ENCODE measurements at regions of chr3 and their contacts with region 1.

Region 1: GRCh38 chr3:141303481-141304223 is 64.7 kb upstream of the ZBTB38 start:
- DNase-seq: peak; percentile 52
- H3K4me3 Mint-ChIP-seq: no peak overlapping the region
- H3K27ac Mint-ChIP-seq: no peak overlapping the region
- H3K4me1 Mint-ChIP-seq: peaks cover 34% of the 10 kb centered on the region
- H3K27me3 Mint-ChIP-seq: peaks cover 4% of the 10 kb centered on the region

Region 2: DNA sequence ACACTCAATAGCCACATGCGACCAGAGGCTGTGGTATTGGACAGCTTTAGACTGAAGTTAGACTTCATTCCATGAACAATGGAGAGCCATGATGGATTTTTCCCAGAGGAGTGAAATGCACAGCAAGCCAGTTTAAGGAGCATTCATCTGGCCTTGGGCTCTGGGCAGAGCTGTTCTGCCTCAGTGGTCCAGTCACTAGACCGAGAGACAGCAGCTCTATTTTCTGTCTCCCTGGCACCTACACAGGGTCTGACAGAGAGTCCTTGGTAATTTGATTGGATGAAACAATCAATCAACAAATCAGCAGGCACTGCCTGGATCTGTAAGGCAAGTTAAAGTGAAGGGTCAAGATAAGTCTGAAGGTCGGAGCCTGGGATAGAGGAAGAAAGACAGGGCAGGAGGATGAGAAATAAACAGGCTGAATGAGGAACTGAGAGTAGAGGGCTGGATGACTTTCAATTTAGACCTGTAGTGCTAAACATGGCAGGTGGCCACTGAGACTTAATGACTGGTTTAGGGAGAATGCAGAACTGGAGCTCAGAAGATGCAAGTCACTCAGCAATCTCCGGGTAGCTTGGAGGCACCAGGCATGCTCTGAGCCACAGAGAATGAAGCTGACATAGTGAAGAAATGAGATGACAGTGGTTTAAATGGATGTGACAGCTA is 460.5 kb before region 1 on chr3:
- intact Hi-C with region 1: no loop called
- DNase-seq: no peak
- H3K4me3 Mint-ChIP-seq: no peak overlapping the region
- H3K27ac Mint-ChIP-seq: no peak overlapping the region
- H3K4me1 Mint-ChIP-seq: peaks cover 16% of the 10 kb centered on the region
- H3K27me3 Mint-ChIP-seq: no peaks in the 10 kb centered on the region

Region 3: GRCh38 chr3:141452036-141452435 is 148.4 kb after region 1 on chr3:
- intact Hi-C with region 1: loop called (anchors 1 kb)
- DNase-seq: peak; percentile 26
- H3K4me3 Mint-ChIP-seq: no peak overlapping the region
- H3K27ac Mint-ChIP-seq: no peak overlapping the region
- H3K4me1 Mint-ChIP-seq: peaks cover 18% of the 10 kb centered on the region
- H3K27me3 Mint-ChIP-seq: no peaks in the 10 kb centered on the region

Region 4: DNA sequence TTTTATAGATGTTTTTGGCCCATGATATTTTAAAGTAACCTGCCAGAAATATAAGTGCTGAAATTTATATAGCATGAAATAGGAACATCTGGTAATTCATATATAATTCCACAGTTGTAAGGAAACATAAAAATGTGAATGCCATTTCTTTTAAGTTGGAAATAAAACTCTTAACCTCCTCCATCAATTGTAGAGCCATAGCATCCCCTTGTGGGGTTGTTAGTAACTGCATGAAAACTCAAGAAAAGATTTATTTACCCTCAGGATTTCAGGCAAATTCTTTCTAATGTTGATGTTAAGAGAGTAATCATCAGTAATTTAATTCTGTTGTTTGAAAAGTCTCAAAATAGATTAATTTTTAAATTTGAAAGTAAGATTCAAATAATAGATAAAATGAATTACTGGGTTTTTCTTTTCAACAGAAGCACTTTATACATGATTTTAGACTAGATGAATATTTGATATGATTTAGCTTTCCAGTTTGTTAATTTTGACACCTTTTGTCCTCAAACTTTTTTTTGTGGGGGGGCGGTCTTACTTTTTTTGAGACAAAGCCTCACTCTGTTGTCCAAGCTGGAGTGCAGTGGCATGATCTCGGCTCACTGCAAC is 257.9 kb after region 1 on chr3:
- intact Hi-C with region 1: no loop called
- DNase-seq: peak; percentile 17
- H3K4me3 Mint-ChIP-seq: no peak overlapping the region
- H3K27ac Mint-ChIP-seq: peak overlapping the region; percentile 61
- H3K4me1 Mint-ChIP-seq: peaks cover 24% of the 10 kb centered on the region
- H3K27me3 Mint-ChIP-seq: no peaks in the 10 kb centered on the region

Region 5: GRCh38 chr3:141597931-141598330 is 294.3 kb after region 1 on chr3:
- intact Hi-C with region 1: no loop called
- DNase-seq: no peak
- H3K4me3 Mint-ChIP-seq: no peak overlapping the region
- H3K27ac Mint-ChIP-seq: no peak overlapping the region
- H3K4me1 Mint-ChIP-seq: no peaks in the 10 kb centered on the region
- H3K27me3 Mint-ChIP-seq: no peaks in the 10 kb centered on the region

Region 6: GRCh38 chr3:141644931-141645330 is 341.3 kb after region 1 on chr3:
- intact Hi-C with region 1: loop called (anchors 2 kb)
- DNase-seq: peak; percentile 51
- H3K4me3 Mint-ChIP-seq: no peak overlapping the region
- H3K27ac Mint-ChIP-seq: no peak overlapping the region
- H3K4me1 Mint-ChIP-seq: no peaks in the 10 kb centered on the region
- H3K27me3 Mint-ChIP-seq: peaks cover 1% of the 10 kb centered on the region

Measured in activated T-helper 1 cell treated with anti-CD3 and anti-CD28 coated beads, Interleukin-12 subunit alpha, Interleukin-12 subunit beta, Interleukin-2, Interleukin-4 antibody, amounts not matched to agents 30 ng/mL and 10 ng/mL and 1 ng/mL, durations not matched to agents 14 hours and 24 hours and 36 hours (primary cell).